Activated CD4-positive, alpha-beta T cell treated with anti-CD3 and anti-CD28 coated beads for 36 hours (primary cell): ENCODE measurements at regions of chr16 and their contacts with region 1.

Region 1: GRCh38 chr16:22077700-22078313 is 14.5 kb upstream of the VWA3A start:
- DNase-seq: peak; percentile 85
- ATAC-seq: peak; percentile 81
- H3K4me3 Mint-ChIP-seq: no peak overlapping the region
- H3K27ac Mint-ChIP-seq: no peak overlapping the region
- H3K4me1 Mint-ChIP-seq: peaks cover 9% of the 10 kb centered on the region
- H3K27me3 Mint-ChIP-seq: no peaks in the 10 kb centered on the region

Region 2: DNA sequence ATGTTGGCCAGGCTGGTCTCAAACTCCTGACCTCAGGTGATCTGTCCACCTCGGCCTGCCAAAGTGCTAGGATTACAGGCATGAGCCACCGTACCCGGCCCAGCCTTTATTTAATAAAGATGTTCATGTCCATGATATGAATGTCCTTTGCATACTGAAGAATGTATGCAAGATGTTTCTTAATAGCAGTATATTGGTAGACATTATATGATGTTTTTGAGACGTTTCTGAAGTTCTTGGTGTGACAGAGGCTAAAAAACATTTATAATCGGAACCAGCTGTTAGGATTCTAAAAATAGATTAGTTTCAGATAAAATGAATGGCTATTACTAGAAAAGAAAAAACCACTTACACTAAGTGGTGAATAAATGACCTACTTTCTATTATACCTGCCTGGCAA is 88.7 kb before region 1 on chr16:
- CTCF ChIA-PET with region 1: interaction called, 35 read pairs
- POLR2A ChIA-PET with region 1: no interaction called
- intact Hi-C with region 1: no loop called
- DNase-seq: no peak
- ATAC-seq: no peak
- H3K4me3 Mint-ChIP-seq: no peak overlapping the region
- H3K27ac Mint-ChIP-seq: no peak overlapping the region
- H3K4me1 Mint-ChIP-seq: peaks cover 9% of the 10 kb centered on the region
- H3K27me3 Mint-ChIP-seq: no peaks in the 10 kb centered on the region

Region 3: DNA sequence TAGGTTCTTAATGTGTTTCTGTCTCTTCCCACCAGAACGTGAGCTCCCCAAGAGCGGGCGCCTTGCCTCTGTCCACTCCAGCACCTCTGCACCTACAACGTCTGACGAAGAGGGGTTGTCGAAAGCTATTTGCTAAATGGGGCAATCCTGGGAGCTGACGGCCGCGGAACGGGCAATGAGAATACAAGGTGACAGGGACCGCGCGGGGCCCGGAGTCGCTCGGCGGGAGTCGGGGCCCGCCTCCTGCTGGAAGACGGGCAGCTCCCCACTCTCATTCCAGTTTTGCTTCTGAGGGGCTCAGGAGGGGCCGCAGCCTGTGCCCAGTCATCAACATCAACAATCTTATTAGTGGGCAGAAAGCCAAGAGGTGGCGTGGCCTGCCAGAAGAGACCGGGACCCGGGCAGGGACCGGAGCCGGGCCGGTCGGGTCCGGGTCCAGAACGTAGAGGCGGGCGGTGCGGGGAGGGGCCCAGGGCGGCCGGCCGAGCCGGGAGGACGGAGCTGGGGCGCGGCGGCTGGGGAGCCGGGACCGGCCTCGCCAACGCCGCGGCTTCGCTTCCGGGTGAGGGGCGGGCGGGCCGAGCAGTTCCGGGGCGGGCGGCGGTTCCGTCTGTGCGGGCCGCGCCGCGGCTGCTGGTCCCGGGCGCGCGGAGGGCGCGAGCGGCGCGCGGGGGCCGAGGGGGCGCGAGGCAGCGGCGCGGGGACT is 70.1 kb before region 1 on chr16 and contains the start of gene MOSMO:
- CTCF ChIA-PET with region 1: interaction called, 326 read pairs
- POLR2A ChIA-PET with region 1: no interaction called
- intact Hi-C with region 1: loop called in 1 of 2 experiments (anchors 1 kb)
- DNase-seq: peak; percentile 81
- ATAC-seq: peak; percentile 89
- H3K4me3 Mint-ChIP-seq: peak within 1 kb of the TSS; percentile 84
- H3K27ac Mint-ChIP-seq: peak within 1 kb of the TSS; percentile 79
- H3K4me1 Mint-ChIP-seq: peaks cover 42% of the 10 kb centered on the region
- H3K27me3 Mint-ChIP-seq: no peaks in the 10 kb centered on the region
- total RNA-seq, gene MOSMO: 7.7 to 8.0 TPM

Region 4: DNA sequence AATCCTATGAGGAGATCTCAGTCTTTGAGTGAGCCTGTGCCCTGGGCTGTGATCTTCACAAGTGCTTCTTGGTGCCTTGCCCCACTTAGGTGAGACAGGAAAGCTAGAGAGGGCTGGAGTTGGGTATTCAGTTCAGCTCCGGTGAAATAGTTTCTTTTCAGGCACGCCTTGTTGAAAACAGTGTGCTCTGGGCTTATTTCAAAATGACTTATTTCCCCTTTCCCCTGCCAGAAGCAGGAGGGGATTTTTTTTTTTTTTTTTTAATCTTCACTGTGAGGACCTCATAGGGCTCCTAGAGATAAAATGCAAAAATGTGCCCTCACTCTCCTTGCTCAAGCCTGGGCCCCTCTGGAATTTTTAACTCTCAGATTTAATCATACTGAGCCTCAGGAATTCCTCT is 42.7 kb before region 1 on chr16:
- CTCF ChIA-PET with region 1: interaction called, 30 read pairs
- POLR2A ChIA-PET with region 1: no interaction called
- intact Hi-C with region 1: no loop called
- DNase-seq: peak; percentile 13
- ATAC-seq: peak; percentile 73
- H3K4me3 Mint-ChIP-seq: no peak overlapping the region
- H3K27ac Mint-ChIP-seq: peak overlapping the region; percentile 67
- H3K4me1 Mint-ChIP-seq: peaks cover 40% of the 10 kb centered on the region
- H3K27me3 Mint-ChIP-seq: no peaks in the 10 kb centered on the region

Region 5: GRCh38 chr16:22063888-22064467 is 13.8 kb before region 1 on chr16:
- CTCF ChIA-PET with region 1: interaction called, 53 read pairs
- POLR2A ChIA-PET with region 1: no interaction called
- intact Hi-C with region 1: no loop called
- DNase-seq: no peak
- ATAC-seq: no peak
- H3K4me3 Mint-ChIP-seq: no peak overlapping the region
- H3K27ac Mint-ChIP-seq: no peak overlapping the region
- H3K4me1 Mint-ChIP-seq: peaks cover 22% of the 10 kb centered on the region
- H3K27me3 Mint-ChIP-seq: no peaks in the 10 kb centered on the region

Region 6: GRCh38 chr16:22098405-22099255 is 20.8 kb after region 1 on chr16:
- CTCF ChIA-PET with region 1: interaction called, 38 read pairs
- POLR2A ChIA-PET with region 1: no interaction called
- intact Hi-C with region 1: no loop called
- DNase-seq: peak; percentile 13
- ATAC-seq: peak; percentile 87
- H3K4me3 Mint-ChIP-seq: no peak overlapping the region
- H3K27ac Mint-ChIP-seq: no peak overlapping the region
- H3K4me1 Mint-ChIP-seq: no peaks in the 10 kb centered on the region
- H3K27me3 Mint-ChIP-seq: peaks cover 6% of the 10 kb centered on the region